ENCODE measurements at regions of chr1 and their contacts with region 1.

Region 1: GRCh38 chr1:12019858-12020509 is 686 bp downstream of the MIIP start:
- DNase-seq: no peak
- ATAC-seq: no peak
- H3K4me3 Mint-ChIP-seq: peak overlapping the region; percentile 85
- H3K27ac Mint-ChIP-seq: peak overlapping the region; percentile 74
- H3K4me1 Mint-ChIP-seq: peaks cover 7% of the 10 kb centered on the region
- H3K27me3 Mint-ChIP-seq: no peaks in the 10 kb centered on the region

Region 2: DNA sequence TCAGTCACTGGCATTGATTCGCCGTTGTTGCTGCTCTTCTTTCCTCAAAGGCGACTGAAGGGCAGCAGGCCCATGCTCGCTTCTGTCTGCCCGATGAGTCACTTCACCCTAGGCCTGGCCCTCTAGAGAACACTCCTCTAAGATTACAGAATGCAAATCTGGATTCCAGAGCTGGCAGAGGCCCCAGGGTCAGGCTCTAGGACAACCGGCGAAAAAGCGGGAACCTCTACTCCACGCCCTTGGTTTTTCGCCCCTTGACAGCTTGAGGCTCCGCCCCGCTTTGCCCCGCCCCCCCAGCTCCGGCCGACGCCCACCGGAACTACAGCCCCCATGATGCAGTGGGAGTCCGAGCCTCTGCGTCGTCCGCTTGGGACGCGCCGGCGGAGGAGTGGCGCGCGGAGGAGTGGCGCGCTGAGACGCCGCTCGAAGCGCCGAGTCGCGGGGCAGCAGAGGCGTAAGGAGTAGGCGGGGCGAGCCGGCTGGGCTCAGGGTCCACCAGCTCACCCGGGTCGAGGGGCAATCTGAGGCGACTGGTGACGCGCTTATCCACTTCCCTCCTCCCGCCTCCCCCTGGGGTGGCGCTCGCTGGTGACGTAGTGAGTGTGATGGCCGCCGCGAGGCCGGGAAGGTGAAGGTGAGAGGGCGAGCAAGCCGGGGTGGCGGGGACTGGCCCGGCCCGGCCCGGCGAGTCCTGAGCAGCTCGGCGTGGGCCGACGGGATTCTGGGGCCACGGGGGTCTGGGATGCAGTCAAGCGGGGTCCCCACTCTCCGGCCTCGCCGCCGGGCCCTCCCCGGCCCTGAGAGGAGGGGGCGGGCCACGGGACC is 39.9 kb before region 1 on chr1 and contains the start of gene MFN2:
- POLR2A ChIA-PET with region 1: interaction called, 10 read pairs
- DNase-seq: peak; percentile 94
- ATAC-seq: peak; percentile 96
- H3K4me3 Mint-ChIP-seq: peak within 1 kb of the TSS; percentile 96
- H3K27ac Mint-ChIP-seq: peak within 1 kb of the TSS; percentile 94
- H3K4me1 Mint-ChIP-seq: peaks cover 28% of the 10 kb centered on the region
- H3K27me3 Mint-ChIP-seq: no peaks in the 10 kb centered on the region
- total RNA-seq, gene MFN2: 51.4 TPM

Region 3: DNA sequence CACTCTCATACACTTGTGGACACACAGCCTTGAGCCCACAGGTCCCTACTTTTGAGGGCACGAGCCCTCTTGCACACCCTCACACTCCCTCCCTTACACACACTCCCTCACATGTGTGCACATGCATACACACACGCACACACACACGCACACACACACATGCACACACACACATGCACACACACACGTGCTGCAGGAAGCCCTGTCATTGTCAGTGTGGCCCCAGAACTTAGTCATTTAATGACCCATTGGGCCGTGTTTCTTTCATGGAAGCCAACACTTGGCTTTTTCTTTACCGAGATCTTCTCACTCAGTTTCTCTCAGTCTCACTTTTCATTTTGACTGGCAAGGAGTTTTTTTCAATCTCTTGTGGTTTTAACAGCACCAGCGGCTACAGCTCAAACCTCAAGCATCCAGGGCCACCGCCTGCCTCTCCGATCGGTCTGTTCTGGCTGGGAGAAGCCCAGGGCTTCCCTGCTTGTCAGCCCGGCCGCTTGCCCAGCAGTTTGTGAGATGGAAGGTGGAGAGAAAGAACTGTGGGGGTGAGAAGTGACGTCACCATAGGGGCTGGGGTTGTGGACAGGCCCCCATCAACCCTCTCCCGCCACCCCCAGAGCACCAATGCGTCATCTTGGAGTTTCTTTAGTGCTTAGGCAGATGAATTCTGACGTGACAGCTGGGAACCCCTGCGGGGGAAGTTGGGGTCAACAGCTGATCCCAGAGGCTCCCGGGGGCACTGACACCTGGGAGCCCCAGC is 27.3 kb after region 1 on chr1:
- POLR2A ChIA-PET with region 1: interaction called, 13 read pairs
- DNase-seq: peak; percentile 67
- ATAC-seq: peak; percentile 85
- H3K4me3 Mint-ChIP-seq: no peak overlapping the region
- H3K27ac Mint-ChIP-seq: no peak overlapping the region
- H3K4me1 Mint-ChIP-seq: peaks cover 11% of the 10 kb centered on the region
- H3K27me3 Mint-ChIP-seq: peaks cover 15% of the 10 kb centered on the region

Region 4: DNA sequence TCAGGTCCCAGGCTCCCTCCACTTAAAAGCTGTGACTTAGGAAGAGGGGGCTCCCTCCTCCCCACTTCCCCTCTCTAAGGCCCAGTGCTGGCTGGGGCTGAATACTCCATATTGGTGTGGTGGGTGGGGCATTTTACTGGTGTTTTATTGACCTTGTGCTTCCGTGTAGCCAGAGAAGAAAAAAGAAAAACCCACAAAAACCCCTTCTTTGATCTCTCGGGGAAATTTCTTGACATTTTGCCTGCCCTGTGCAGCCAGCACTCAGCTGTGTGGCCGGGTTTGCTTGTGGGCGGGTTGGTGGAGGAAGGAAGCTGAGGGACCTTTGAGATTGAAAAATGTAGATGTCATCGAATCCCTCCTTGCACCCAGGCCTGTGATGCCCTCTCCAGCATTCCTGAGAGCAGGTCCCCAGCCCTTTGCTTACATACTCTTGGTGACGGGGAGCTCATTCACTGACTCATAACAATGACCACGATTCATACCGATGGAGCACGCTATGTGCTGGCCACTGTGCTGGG is 67.9 kb after region 1 on chr1:
- POLR2A ChIA-PET with region 1: interaction called, 16 read pairs
- DNase-seq: peak; percentile 69
- ATAC-seq: peak; percentile 79
- H3K4me3 Mint-ChIP-seq: peak overlapping the region; percentile 61
- H3K27ac Mint-ChIP-seq: peak overlapping the region; percentile 85
- H3K4me1 Mint-ChIP-seq: peaks cover 31% of the 10 kb centered on the region
- H3K27me3 Mint-ChIP-seq: no peaks in the 10 kb centered on the region